Psoas muscle (tissue), 8 donors: ENCODE measurements at regions of chr1 and their contacts with region 1.

Region 1: GRCh38 chr1:86380257-86380861 is 15.8 kb downstream of the ODF2L start:
- DNase-seq: no peak
- ATAC-seq: peak in 3 of 4 donors; percentile 57 to 83 (median 72)
- H3K4me3 ChIP-seq: peak overlapping the region; percentile 19
- H3K27ac ChIP-seq: no peak overlapping the region
- H3K4me1 ChIP-seq: no peaks in the 10 kb centered on the region
- H3K27me3 ChIP-seq: no peaks in the 10 kb centered on the region
- CTCF ChIP-seq: peak; percentile 85

Region 2: GRCh38 chr1:86499987-86500593 is 119.7 kb after region 1 on chr1:
- intact Hi-C with region 1: loop called in 1 of 2 experiments (anchors 5 kb)
- DNase-seq: no peak
- ATAC-seq: peak in 1 of 4 donors; percentile 64
- H3K4me3 ChIP-seq: no peak overlapping the region
- H3K27ac ChIP-seq: no peak overlapping the region
- H3K4me1 ChIP-seq: peaks cover 5% of the 10 kb centered on the region
- H3K27me3 ChIP-seq: no peaks in the 10 kb centered on the region
- CTCF ChIP-seq: peak; percentile 61

Region 3: GRCh38 chr1:86507935-86508582 is 127.7 kb after region 1 on chr1:
- intact Hi-C with region 1: loop called (anchors 2 to 5 kb)
- DNase-seq: no peak
- ATAC-seq: no peak
- H3K4me3 ChIP-seq: no peak overlapping the region
- H3K27ac ChIP-seq: no peak overlapping the region
- H3K4me1 ChIP-seq: no peaks in the 10 kb centered on the region
- H3K27me3 ChIP-seq: no peaks in the 10 kb centered on the region
- CTCF ChIP-seq: peak; percentile 34

Region 4: DNA sequence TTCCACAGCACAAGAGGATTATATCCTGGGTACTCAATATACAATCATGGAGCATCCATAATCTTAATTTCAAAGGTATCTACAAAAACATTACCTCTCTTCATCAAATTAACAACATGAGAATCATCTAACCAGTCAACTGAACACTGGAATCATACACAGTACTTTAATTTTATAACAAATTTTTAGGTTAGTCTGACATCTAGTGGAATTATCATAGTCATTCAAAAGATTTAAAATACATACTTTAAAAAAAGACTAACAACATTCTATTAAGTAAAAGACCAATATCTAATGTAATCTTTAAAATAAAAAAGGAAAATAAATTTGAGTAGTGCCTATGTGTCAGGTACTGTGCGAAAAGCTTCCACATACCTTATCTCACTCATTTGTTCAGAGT is 307.2 kb after region 1 on chr1:
- intact Hi-C with region 1: loop called in 1 of 2 experiments (anchors 5 kb)
- DNase-seq: no peak
- ATAC-seq: no peak
- H3K4me3 ChIP-seq: no peak overlapping the region
- H3K27ac ChIP-seq: no peak overlapping the region
- H3K4me1 ChIP-seq: no peaks in the 10 kb centered on the region
- H3K27me3 ChIP-seq: no peaks in the 10 kb centered on the region
- CTCF ChIP-seq: no peak